Gastrocnemius medialis (tissue), 4 donors: ENCODE measurements at regions of chr13 and their contacts with region 1.

Region 1: DNA sequence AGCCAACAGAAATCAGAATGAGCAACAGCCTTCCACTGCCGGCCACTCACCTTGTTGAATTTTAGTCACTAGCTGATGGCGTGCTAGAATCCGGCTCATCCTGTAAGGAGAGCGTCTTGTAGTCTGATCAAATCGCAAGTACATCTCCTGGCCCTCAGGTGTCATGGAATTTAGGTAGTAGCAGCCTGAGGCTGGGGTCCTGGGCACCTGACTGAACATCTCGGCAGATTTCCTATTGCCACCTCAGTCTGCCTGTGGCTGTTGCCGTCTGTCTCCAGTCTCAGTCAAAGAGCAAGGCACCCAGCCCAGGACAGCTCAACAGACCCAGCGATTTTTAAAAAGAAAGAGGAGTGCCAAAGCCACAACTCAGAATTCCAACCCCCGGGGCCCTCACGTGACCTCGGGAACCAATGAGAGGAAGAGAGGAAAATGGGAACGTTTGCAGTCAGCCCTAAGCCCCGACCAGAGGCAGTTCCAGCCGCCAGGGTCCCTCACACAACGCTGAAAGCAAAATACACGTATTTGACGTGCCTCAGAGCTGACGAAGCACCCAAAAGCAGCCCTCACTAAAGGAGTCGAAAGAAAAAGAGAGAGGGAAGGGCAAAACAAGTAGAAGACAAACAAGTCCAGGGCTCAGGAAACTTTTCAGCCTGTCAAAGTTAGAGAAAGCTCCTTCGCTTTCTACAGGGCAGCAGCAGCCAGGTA is at the start of gene STARD13:
- DNase-seq: peak; percentile 92 to 93
- ATAC-seq: peak; percentile 92 to 94
- H3K4me3 ChIP-seq: peak within 1 kb of the TSS; percentile 70 to 84 (median 74)
- H3K27ac ChIP-seq: peak within 1 kb of the TSS; percentile 84 to 93 (median 90)
- H3K4me1 ChIP-seq: peaks cover 21 to 33% of the 10 kb centered on the region in 2 donors
- H3K27me3 ChIP-seq: no peaks in the 10 kb centered on the region
- CTCF ChIP-seq: peak; percentile 18 to 45 (median 37)
- POLR2A ChIP-seq: peak; percentile 79 to 91
- total RNA-seq, gene STARD13: 7.7 to 19.3 (median 12.0) TPM

Region 2: GRCh38 chr13:32984846-32985544 is 300.6 kb before region 1 on chr13:
- in situ Hi-C with region 1: no loop called
- intact Hi-C with region 1: no loop called
- DNase-seq: no peak
- ATAC-seq: no peak
- H3K4me3 ChIP-seq: no peak overlapping the region
- H3K27ac ChIP-seq: no peak overlapping the region
- H3K4me1 ChIP-seq: peaks cover 0 to 6% of the 10 kb centered on the region in 2 donors
- H3K27me3 ChIP-seq: no peaks in the 10 kb centered on the region
- CTCF ChIP-seq: no peak
- POLR2A ChIP-seq: no peak

Region 3: GRCh38 chr13:33174931-33175330 is 110.6 kb before region 1 on chr13:
- in situ Hi-C with region 1: no loop called
- intact Hi-C with region 1: no loop called
- DNase-seq: no peak
- ATAC-seq: no peak
- H3K4me3 ChIP-seq: no peak overlapping the region
- H3K27ac ChIP-seq: peak overlapping the region in 2 of 4 donors; percentile 11 to 12
- H3K4me1 ChIP-seq: peaks cover 23 to 52% of the 10 kb centered on the region in 2 donors
- H3K27me3 ChIP-seq: no peaks in the 10 kb centered on the region
- CTCF ChIP-seq: no peak
- POLR2A ChIP-seq: no peak

Region 4: DNA sequence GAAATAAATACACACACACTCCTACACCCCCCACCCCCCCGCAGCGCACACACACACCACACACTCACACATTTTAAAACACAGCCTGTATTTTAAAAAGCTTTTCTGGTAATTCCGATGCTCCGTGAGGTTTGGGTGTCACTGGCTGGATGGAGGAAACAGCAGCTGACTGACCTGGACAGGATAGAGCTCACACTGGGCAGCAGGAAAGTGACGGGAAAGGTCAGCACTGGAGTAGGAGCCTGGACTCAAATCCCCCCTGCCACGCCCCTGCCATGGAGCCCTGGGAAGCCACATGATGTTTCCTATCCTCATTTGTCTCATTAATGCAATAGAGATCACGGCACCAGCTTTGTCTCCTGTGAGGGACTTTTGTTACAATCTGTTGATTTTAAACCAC is 49.3 kb after region 1 on chr13:
- in situ Hi-C with region 1: loop called in 1 of 4 experiments (anchors 5 kb)
- intact Hi-C with region 1: no loop called
- DNase-seq: no peak
- ATAC-seq: no peak
- H3K4me3 ChIP-seq: no peak overlapping the region
- H3K27ac ChIP-seq: no peak overlapping the region
- H3K4me1 ChIP-seq: no peaks in the 10 kb centered on the region
- H3K27me3 ChIP-seq: no peaks in the 10 kb centered on the region
- CTCF ChIP-seq: no peak
- POLR2A ChIP-seq: no peak

Region 5: GRCh38 chr13:33349986-33350826 is 64.6 kb after region 1 on chr13:
- in situ Hi-C with region 1: loop called in 1 of 4 experiments (anchors 10 kb)
- intact Hi-C with region 1: loop called (anchors 2 kb)
- DNase-seq: peak; percentile 34 to 47
- ATAC-seq: peak; percentile 26 to 28
- H3K4me3 ChIP-seq: peak overlapping the region; percentile 60 to 85 (median 80)
- H3K27ac ChIP-seq: peak overlapping the region; percentile 60 to 82 (median 78)
- H3K4me1 ChIP-seq: peaks cover 23 to 33% of the 10 kb centered on the region in 2 donors
- H3K27me3 ChIP-seq: no peaks in the 10 kb centered on the region
- CTCF ChIP-seq: no peak
- POLR2A ChIP-seq: peak; percentile 20 to 36